Panc1 (cell line): ENCODE measurements at regions of chr7 and their contacts with region 1.

Region 1: GRCh38 chr7:14936554-14936953 is 34.0 kb upstream of the DGKB start:
- DNase-seq: no peak
- ATAC-seq: no peak
- H3K4me3 ChIP-seq: no peak overlapping the region
- H3K27ac ChIP-seq: no peak overlapping the region
- H3K4me1 ChIP-seq: no peaks in the 10 kb centered on the region
- H3K27me3 ChIP-seq: no peaks in the 10 kb centered on the region
- CTCF ChIP-seq: no peak

Region 2: GRCh38 chr7:14962778-14963177 is 26.2 kb after region 1 on chr7:
- CTCF ChIA-PET with region 1: no interaction called
- POLR2A ChIA-PET with region 1: interaction called, 15 read pairs
- in situ Hi-C with region 1: no loop called
- intact Hi-C with region 1: no loop called
- DNase-seq: no peak
- ATAC-seq: no peak
- H3K4me3 ChIP-seq: no peak overlapping the region
- H3K27ac ChIP-seq: no peak overlapping the region
- H3K4me1 ChIP-seq: no peaks in the 10 kb centered on the region
- H3K27me3 ChIP-seq: no peaks in the 10 kb centered on the region
- CTCF ChIP-seq: no peak